Calu3 (cell line): ENCODE measurements at regions of chr18 and their contacts with region 1.

Region 1: GRCh38 chr18:5057386-5058348 is 139.4 kb downstream of the AKAIN1 start:
- DNase-seq: peak; percentile 76
- H3K4me3 Mint-ChIP-seq: no peak overlapping the region
- H3K27ac Mint-ChIP-seq: no peak overlapping the region
- H3K4me1 Mint-ChIP-seq: peaks cover 8% of the 10 kb centered on the region
- H3K27me3 Mint-ChIP-seq: peaks cover 18% of the 10 kb centered on the region
- CTCF ChIP-seq: peak; percentile 92

Region 2: DNA sequence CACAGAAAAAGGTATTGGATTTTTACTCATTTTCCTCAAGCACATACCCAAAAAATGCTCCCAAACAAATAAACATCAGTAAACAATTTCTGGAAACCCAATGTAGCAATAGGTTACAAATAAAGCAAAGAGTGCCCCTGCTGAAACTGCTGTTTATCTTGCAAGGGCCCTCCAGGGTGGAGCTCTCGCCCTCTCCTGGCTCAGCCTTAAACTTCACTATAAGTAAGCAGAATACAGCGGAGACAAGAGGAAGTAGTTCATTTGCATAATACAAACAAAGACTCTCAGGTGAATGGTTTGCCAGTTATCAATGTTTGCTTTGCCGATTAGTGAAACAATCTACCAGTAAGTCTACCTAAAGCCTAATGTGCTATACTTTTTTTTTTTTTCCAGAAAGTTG is 1040.2 kb before region 1 on chr18:
- CTCF ChIA-PET with region 1: no interaction called
- intact Hi-C with region 1: loop called (anchors 5 kb)
- DNase-seq: peak; percentile 53
- H3K4me3 Mint-ChIP-seq: no peak overlapping the region
- H3K27ac Mint-ChIP-seq: no peak overlapping the region
- H3K4me1 Mint-ChIP-seq: peaks cover 17% of the 10 kb centered on the region
- H3K27me3 Mint-ChIP-seq: no peaks in the 10 kb centered on the region
- CTCF ChIP-seq: no peak

Region 3: DNA sequence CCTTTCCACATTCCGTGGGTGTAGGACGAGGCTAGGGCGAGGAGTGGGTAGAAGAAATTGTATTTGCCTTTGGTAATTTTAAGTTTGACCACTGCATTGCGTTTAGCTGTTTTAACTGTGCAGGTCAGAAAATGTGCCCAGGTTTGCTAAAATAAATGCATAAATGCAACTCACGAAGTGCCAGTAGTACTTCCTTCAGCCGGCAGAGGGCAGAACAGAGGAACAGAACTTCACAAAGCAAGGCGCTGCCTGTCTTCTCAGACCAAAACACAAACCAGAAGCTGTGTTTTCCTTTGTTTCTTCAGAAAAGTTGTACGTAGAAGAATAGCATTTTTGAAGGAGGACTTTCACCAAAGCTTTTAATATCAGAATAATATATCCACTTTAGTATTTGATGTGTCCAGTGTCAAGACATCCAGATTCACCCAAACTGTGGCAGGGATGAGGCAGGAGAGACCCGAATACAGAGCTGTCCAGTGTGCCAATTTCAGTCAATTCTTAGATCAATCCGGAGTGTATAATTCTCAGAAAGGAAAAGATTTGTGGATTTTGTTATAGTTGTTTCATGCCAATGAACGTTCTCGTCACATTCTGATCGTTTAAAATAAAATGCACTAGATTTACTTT is 951.1 kb before region 1 on chr18:
- CTCF ChIA-PET with region 1: interaction called, 7 read pairs
- intact Hi-C with region 1: loop called (anchors 1 kb)
- DNase-seq: peak; percentile 71
- H3K4me3 Mint-ChIP-seq: no peak overlapping the region
- H3K27ac Mint-ChIP-seq: no peak overlapping the region
- H3K4me1 Mint-ChIP-seq: no peaks in the 10 kb centered on the region
- H3K27me3 Mint-ChIP-seq: peaks cover 13% of the 10 kb centered on the region
- CTCF ChIP-seq: peak; percentile 62

Region 4: GRCh38 chr18:4181882-4182568 is 875.6 kb before region 1 on chr18:
- CTCF ChIA-PET with region 1: no interaction called
- intact Hi-C with region 1: loop called (anchors 10 kb)
- DNase-seq: no peak
- H3K4me3 Mint-ChIP-seq: no peak overlapping the region
- H3K27ac Mint-ChIP-seq: no peak overlapping the region
- H3K4me1 Mint-ChIP-seq: no peaks in the 10 kb centered on the region
- H3K27me3 Mint-ChIP-seq: no peaks in the 10 kb centered on the region
- CTCF ChIP-seq: no peak

Region 5: DNA sequence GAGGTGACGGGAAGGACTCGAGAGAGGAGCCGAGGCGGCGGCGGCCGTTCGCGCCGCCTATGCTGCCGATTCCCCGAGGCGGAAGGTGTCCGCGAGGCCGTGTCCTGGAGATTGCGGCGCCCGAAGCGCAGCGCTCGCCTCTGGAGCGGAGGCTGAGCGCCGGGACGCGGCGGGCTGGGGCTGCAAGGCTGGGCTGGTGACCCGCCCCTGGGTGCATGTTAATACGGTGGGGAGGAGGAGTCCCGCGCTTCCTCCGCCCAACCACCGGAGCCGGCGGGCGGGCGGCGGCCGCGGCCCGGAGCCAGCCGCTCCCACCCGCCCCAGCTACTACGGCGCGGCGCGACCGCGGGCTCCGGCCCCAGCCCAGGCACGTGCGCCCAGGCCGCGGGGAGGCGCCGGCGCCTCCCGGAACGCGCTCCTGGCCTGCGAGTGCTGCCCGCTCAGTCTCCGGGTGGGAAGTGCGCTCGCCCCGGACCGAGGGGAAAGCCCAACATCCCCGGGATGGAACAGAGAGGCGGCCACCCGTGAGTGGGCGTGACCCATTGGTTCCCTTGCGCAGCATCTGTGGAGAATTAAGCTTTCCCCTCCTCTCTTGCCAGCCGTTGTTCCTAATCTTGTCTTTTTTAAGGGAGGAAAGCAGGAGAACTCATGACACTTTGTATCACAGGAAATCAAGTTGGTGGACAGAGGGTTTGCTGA is 602.4 kb before region 1 on chr18 and contains the start of gene DLGAP1:
- CTCF ChIA-PET with region 1: no interaction called
- intact Hi-C with region 1: loop called (anchors 10 kb)
- DNase-seq: peak; percentile 66
- H3K4me3 Mint-ChIP-seq: peak within 1 kb of the TSS; percentile 72
- H3K27ac Mint-ChIP-seq: no peak within 1 kb of the TSS
- H3K4me1 Mint-ChIP-seq: peaks cover 11% of the 10 kb centered on the region
- H3K27me3 Mint-ChIP-seq: no peaks in the 10 kb centered on the region
- CTCF ChIP-seq: no peak
- total RNA-seq, gene DLGAP1: 3.2 and 9.0 TPM in 2 replicates

Region 6: DNA sequence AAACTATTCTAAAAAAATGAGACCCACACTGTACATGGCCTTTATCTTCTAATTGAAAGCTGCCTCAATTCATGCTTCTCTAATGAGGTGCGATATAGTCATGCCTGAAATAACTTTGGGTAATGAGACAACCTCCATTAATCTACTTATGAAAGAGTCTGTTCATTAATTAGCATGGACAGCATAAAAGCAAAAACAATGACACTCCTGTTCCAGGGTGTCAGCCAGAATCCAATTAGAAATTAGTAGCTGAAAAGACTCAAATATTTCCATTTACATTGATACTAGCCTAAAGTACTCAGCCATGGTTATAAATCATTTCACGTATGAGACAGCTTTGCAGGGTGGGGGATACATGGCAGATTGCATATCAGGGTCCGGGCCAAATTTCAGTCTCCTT is 149.3 kb before region 1 on chr18:
- CTCF ChIA-PET with region 1: no interaction called
- intact Hi-C with region 1: no loop called
- DNase-seq: no peak
- H3K4me3 Mint-ChIP-seq: no peak overlapping the region
- H3K27ac Mint-ChIP-seq: no peak overlapping the region
- H3K4me1 Mint-ChIP-seq: no peaks in the 10 kb centered on the region
- H3K27me3 Mint-ChIP-seq: no peaks in the 10 kb centered on the region
- CTCF ChIP-seq: no peak

Region 7: GRCh38 chr18:5103286-5103685 is 45.6 kb after region 1 on chr18:
- CTCF ChIA-PET with region 1: no interaction called
- intact Hi-C with region 1: no loop called
- DNase-seq: no peak
- H3K4me3 Mint-ChIP-seq: no peak overlapping the region
- H3K27ac Mint-ChIP-seq: no peak overlapping the region
- H3K4me1 Mint-ChIP-seq: no peaks in the 10 kb centered on the region
- H3K27me3 Mint-ChIP-seq: no peaks in the 10 kb centered on the region
- CTCF ChIP-seq: no peak